Activated CD4-positive, alpha-beta T cell treated with anti-CD3 and anti-CD28 coated beads for 36 hours (primary cell): ENCODE measurements at regions of chr1 and their contacts with region 1.

Region 1: GRCh38 chr1:18956369-18957135 is at the start of gene IFFO2:
- DNase-seq: peak; percentile 99
- ATAC-seq: peak; percentile 76
- H3K4me3 Mint-ChIP-seq: peak within 1 kb of the TSS; percentile 86
- H3K27ac Mint-ChIP-seq: peak within 1 kb of the TSS; percentile 78
- H3K4me1 Mint-ChIP-seq: peaks cover 45% of the 10 kb centered on the region
- H3K27me3 Mint-ChIP-seq: peaks cover 2% of the 10 kb centered on the region
- total RNA-seq, gene IFFO2: 48.3 to 62.7 TPM

Region 2: GRCh38 chr1:18926315-18927081 is 30.1 kb before region 1 on chr1:
- CTCF ChIA-PET with region 1: interaction called, 66 read pairs
- POLR2A ChIA-PET with region 1: interaction called, 43 read pairs
- intact Hi-C with region 1: loop called (anchors 1 kb)
- DNase-seq: peak; percentile 94
- ATAC-seq: peak; percentile 89
- H3K4me3 Mint-ChIP-seq: peak overlapping the region; percentile 69
- H3K27ac Mint-ChIP-seq: peak overlapping the region; percentile 99
- H3K4me1 Mint-ChIP-seq: peaks cover 92% of the 10 kb centered on the region
- H3K27me3 Mint-ChIP-seq: no peaks in the 10 kb centered on the region

Region 3: GRCh38 chr1:19074902-19075721 is 118.6 kb after region 1 on chr1:
- CTCF ChIA-PET with region 1: interaction called, 7 read pairs
- POLR2A ChIA-PET with region 1: interaction called, 6 read pairs
- intact Hi-C with region 1: loop called (anchors 1 to 5 kb)
- DNase-seq: no peak
- ATAC-seq: peak; percentile 28
- H3K4me3 Mint-ChIP-seq: no peak overlapping the region
- H3K27ac Mint-ChIP-seq: peak overlapping the region; percentile 11
- H3K4me1 Mint-ChIP-seq: peaks cover 53% of the 10 kb centered on the region
- H3K27me3 Mint-ChIP-seq: no peaks in the 10 kb centered on the region

Region 4: GRCh38 chr1:19311959-19312781 is 355.6 kb after region 1 on chr1 and contains the starts of genes AKR7A2 and SLC66A1:
- CTCF ChIA-PET with region 1: no interaction called
- POLR2A ChIA-PET with region 1: no interaction called
- intact Hi-C with region 1: loop called in 1 of 2 experiments (anchors 5 kb)
- DNase-seq: peak; percentile 95
- ATAC-seq: peak; percentile 97
- H3K4me3 Mint-ChIP-seq: peak within 1 kb of the TSS; percentile 78
- H3K27ac Mint-ChIP-seq: peak within 1 kb of the TSS; percentile 61
- H3K4me1 Mint-ChIP-seq: peaks cover 23% of the 10 kb centered on the region
- H3K27me3 Mint-ChIP-seq: no peaks in the 10 kb centered on the region
- total RNA-seq, gene AKR7A2: 41.3 to 43.0 TPM
- total RNA-seq, gene SLC66A1: 5.9 to 6.5 TPM